ENCODE measurements at regions of chr4 and their contacts with region 1.

Region 1: GRCh38 chr4:53908661-53909078 is 155.7 kb downstream of the CHIC2 start:
- DNase-seq: peak; percentile 74
- H3K4me3 ChIP-seq: peak overlapping the region; percentile 20
- H3K27me3 ChIP-seq: no peaks in the 10 kb centered on the region; the same call in 1 of the 2 replicates
- CTCF ChIP-seq: peak; percentile 76

Region 2: GRCh38 chr4:53702334-53703266 is 206.1 kb before region 1 on chr4:
- CTCF ChIA-PET with region 1: interaction called, 19 read pairs
- POLR2A ChIA-PET with region 1: no interaction called
- DNase-seq: peak; percentile 29
- H3K4me3 ChIP-seq: no peak overlapping the region
- H3K27me3 ChIP-seq: no peaks in the 10 kb centered on the region
- CTCF ChIP-seq: peak; percentile 37

Region 3: GRCh38 chr4:53748328-53748772 is 160.3 kb before region 1 on chr4:
- CTCF ChIA-PET with region 1: no interaction called
- POLR2A ChIA-PET with region 1: no interaction called
- DNase-seq: no peak
- H3K4me3 ChIP-seq: no peak overlapping the region
- H3K27me3 ChIP-seq: no peaks in the 10 kb centered on the region
- CTCF ChIP-seq: no peak

Region 4: GRCh38 chr4:53920116-53920515 is 11.4 kb after region 1 on chr4:
- CTCF ChIA-PET with region 1: interaction called, 16 read pairs
- POLR2A ChIA-PET with region 1: no interaction called
- DNase-seq: no peak
- H3K4me3 ChIP-seq: no peak overlapping the region
- H3K27me3 ChIP-seq: no peaks in the 10 kb centered on the region
- CTCF ChIP-seq: no peak

Region 5: DNA sequence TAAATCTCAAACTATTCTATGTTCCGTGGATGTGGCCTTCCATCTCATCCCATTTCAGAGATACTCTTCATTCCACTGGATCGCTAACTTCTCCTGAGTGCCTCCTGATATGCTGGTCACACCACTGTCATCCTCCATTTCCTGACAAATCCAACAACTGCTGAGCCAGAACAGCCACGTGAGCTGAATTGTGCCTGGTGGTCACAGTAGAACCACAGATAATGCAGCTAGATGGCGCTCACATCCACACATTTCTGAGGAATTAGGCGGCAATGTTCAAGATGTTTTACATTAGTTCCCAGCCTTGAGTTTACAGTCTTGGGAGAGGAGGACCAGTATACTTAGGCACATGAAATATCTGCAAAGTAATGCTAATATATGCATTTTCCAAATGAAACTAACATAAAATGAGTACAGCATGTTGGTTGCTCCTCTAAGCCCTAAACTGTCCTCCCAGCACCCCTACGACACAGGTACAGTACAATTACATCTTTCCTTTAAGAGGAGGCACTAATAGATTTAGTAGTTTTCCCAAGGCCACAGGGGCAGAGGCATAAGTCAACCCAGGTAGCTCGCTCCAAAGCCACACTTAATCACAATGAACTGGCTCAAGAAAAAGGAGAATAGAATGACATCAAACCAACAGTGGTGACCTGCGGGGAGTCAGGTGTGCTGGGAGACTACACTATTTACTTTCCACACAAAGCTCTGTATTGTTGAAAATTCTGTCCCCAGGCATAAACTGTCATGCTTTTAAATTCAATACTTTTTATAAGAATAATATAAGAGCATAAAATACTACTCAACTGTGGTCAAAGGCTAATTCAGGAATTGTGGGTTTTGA is 21.5 kb after region 1 on chr4:
- CTCF ChIA-PET with region 1: interaction called, 28 read pairs
- POLR2A ChIA-PET with region 1: no interaction called
- DNase-seq: peak; percentile 52
- H3K4me3 ChIP-seq: no peak overlapping the region
- H3K27me3 ChIP-seq: no peaks in the 10 kb centered on the region
- CTCF ChIP-seq: peak; percentile 73

Region 6: DNA sequence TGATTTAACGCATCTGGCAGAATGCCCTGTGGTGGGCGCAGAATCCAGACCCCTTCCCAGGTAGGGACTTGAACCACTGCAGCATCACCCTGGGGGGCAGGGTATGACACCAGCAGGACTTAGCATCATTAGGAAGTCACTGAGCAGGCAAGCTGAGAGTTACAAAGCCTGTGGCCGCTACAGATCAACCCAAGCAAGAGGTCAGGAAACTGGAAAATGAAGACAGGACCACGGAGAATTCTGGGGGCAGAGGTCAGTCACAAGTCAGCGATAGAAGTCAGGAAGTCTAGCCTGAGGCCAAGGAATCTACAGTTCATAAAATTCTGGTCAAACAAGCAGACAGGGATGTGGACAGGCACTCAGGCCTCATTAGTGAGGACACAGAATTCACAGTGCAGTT is 47.4 kb after region 1 on chr4:
- CTCF ChIA-PET with region 1: no interaction called
- POLR2A ChIA-PET with region 1: no interaction called
- DNase-seq: no peak
- H3K4me3 ChIP-seq: no peak overlapping the region
- H3K27me3 ChIP-seq: no peaks in the 10 kb centered on the region
- CTCF ChIP-seq: no peak

Region 7: GRCh38 chr4:54217642-54218495 is 309.2 kb after region 1 on chr4:
- CTCF ChIA-PET with region 1: interaction called, 12 read pairs
- POLR2A ChIA-PET with region 1: no interaction called
- DNase-seq: peak; percentile 72
- H3K4me3 ChIP-seq: peak overlapping the region; percentile 39
- H3K27me3 ChIP-seq: no peaks in the 10 kb centered on the region; the same call in 1 of the 2 replicates
- CTCF ChIP-seq: peak; percentile 87

Region 8: GRCh38 chr4:54228056-54228527 is 319.4 kb after region 1 on chr4:
- CTCF ChIA-PET with region 1: interaction called, 41 read pairs
- POLR2A ChIA-PET with region 1: no interaction called
- DNase-seq: no peak
- H3K4me3 ChIP-seq: peak overlapping the region; percentile 92
- H3K27me3 ChIP-seq: no peaks in the 10 kb centered on the region
- CTCF ChIP-seq: peak; percentile 97

Measured in BJ (cell line).